Activated CD4-positive, alpha-beta memory T cell treated with anti-CD3 and anti-CD28 coated beads for 36 hours (primary cell): ENCODE measurements at regions of chr1 and their contacts with region 1.

Region 1: GRCh38 chr1:3772027-3772714 is 378 bp upstream of the SMIM1 start:
- DNase-seq: peak; percentile 94
- H3K4me3 Mint-ChIP-seq: peak overlapping the region; percentile 57
- H3K27ac Mint-ChIP-seq: no peak overlapping the region
- H3K4me1 Mint-ChIP-seq: peaks cover 5% of the 10 kb centered on the region
- H3K27me3 Mint-ChIP-seq: peaks cover 4% of the 10 kb centered on the region

Region 2: DNA sequence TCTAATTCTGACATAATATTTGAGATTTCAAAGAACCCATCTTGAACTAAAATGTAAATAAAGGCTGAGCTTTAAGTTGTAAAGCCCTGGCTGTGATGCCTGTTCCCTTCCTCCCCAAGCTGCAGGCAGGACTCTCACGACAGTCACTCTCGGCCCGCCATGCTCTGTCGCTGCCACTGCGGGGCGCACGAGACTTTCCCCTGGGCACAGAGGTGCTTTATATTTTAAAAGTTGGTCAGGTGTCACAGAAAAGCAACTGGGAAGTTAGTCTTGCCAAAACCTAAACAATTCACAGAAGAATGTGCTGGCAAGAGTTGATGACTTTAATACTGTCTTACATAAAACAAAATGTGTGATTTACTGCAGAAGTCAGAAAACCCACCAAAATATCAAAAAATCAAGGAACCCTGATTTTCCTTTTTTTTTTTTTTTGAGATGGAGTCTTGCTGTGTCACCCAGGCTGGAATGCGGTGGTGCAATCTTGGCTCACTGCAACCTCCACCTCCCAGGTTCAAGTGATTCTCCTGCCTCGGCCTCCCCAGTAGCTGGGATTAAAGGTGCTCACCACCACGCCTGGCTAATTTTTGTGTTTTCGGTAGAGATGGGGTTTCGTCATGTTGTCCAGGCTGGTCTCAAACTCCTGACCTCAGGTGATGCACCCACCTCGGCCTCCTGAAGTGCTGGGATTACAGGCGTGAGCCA is 13.4 kb after region 1 on chr1:
- CTCF ChIA-PET with region 1: interaction called, 10 read pairs
- POLR2A ChIA-PET with region 1: interaction called, 3 read pairs
- intact Hi-C with region 1: no loop called
- DNase-seq: peak; percentile 34
- H3K4me3 Mint-ChIP-seq: no peak overlapping the region
- H3K27ac Mint-ChIP-seq: no peak overlapping the region
- H3K4me1 Mint-ChIP-seq: peaks cover 19% of the 10 kb centered on the region
- H3K27me3 Mint-ChIP-seq: no peaks in the 10 kb centered on the region

Region 3: DNA sequence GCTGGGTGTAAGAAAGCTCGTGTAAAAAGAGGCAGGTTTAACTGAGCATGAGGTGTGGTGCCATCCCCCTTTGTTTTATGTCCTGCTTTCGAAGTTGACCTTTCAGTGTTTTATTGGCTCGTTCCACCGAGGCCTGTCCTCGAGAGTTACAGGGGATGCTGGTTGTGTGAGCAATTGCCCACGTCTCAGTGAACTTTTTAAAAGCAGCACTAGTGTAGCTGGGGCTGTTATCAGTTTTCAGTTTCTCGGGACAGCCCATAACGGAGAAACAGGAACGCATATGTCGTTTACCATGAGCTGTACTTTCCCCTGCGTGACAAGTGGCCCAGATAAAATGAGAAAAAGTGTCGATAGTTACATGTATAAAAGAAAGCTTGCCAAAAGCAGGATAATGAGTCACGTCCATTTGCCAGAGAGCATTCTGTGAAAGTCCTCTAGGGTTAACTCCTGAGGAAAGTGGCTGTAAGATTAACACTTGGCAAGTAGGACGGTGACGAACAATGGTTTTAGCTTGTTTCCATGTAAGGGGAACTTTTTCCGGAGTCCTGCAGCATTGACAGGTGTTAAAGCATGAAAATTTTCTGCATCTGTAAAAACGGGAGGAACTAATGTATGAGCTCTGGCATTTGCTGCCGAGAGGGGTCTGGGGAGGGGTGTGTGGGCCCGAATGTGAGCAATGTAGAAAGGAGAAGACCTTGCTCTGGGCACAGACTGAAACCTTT is 31.9 kb after region 1 on chr1:
- CTCF ChIA-PET with region 1: interaction called, 39 read pairs
- POLR2A ChIA-PET with region 1: no interaction called
- intact Hi-C with region 1: loop called (anchors 1 kb)
- DNase-seq: no peak
- H3K4me3 Mint-ChIP-seq: no peak overlapping the region
- H3K27ac Mint-ChIP-seq: no peak overlapping the region
- H3K4me1 Mint-ChIP-seq: peaks cover 9% of the 10 kb centered on the region
- H3K27me3 Mint-ChIP-seq: peaks cover 20% of the 10 kb centered on the region

Region 4: GRCh38 chr1:3881193-3881480 is 109.0 kb after region 1 on chr1:
- CTCF ChIA-PET with region 1: no interaction called
- POLR2A ChIA-PET with region 1: no interaction called
- intact Hi-C with region 1: no loop called
- DNase-seq: no peak
- H3K4me3 Mint-ChIP-seq: no peak overlapping the region
- H3K27ac Mint-ChIP-seq: no peak overlapping the region
- H3K4me1 Mint-ChIP-seq: peaks cover 2% of the 10 kb centered on the region
- H3K27me3 Mint-ChIP-seq: no peaks in the 10 kb centered on the region